Activated CD4-positive, alpha-beta T cell treated with anti-CD3 and anti-CD28 coated beads for 36 hours (primary cell): ENCODE measurements at regions of chr1 and their contacts with region 1.

Region 1: GRCh38 chr1:208245185-208245705 is 1.1 kb upstream of the PLXNA2 start:
- DNase-seq: peak; percentile 88
- ATAC-seq: peak; percentile 75
- H3K4me3 Mint-ChIP-seq: peak overlapping the region; percentile 44
- H3K27ac Mint-ChIP-seq: no peak overlapping the region
- H3K4me1 Mint-ChIP-seq: peaks cover 12% of the 10 kb centered on the region
- H3K27me3 Mint-ChIP-seq: peaks cover 21% of the 10 kb centered on the region

Region 2: GRCh38 chr1:208093754-208094719 is 151.2 kb before region 1 on chr1:
- CTCF ChIA-PET with region 1: interaction called, 7 read pairs
- POLR2A ChIA-PET with region 1: no interaction called
- intact Hi-C with region 1: loop called in 1 of 2 experiments (anchors 2 kb)
- DNase-seq: peak; percentile 83
- ATAC-seq: peak; percentile 64
- H3K4me3 Mint-ChIP-seq: no peak overlapping the region
- H3K27ac Mint-ChIP-seq: no peak overlapping the region
- H3K4me1 Mint-ChIP-seq: no peaks in the 10 kb centered on the region
- H3K27me3 Mint-ChIP-seq: no peaks in the 10 kb centered on the region

Region 3: DNA sequence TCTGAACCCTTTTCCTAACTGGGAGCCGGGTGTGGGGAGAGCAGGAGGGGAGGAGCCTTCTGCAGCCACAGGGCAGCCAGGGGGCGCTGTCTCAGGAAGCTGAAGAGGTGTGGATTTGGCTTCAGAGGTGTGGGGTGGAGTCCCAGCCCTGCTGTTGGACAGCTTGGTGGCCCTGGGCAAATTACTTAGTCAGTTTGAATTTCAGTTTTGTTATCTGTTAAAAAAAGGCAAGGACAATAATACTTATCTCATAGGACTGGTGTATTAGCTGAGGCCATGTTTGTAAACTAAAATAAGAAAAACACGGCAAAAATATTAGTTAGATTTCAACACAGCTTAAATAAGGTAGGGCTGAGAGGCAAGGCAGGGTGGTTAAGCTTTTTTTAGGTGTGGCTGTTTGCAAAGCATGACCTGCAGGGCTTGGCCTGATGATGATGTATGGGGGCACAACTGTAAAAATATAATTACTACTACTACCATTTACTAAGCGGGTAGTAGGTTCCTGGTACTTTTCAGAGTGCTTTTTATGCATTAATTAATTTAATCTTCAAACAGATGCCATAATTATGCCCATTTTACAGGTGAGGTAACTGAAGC is 112.9 kb before region 1 on chr1:
- CTCF ChIA-PET with region 1: interaction called, 40 read pairs
- POLR2A ChIA-PET with region 1: no interaction called
- intact Hi-C with region 1: loop called (anchors 1 to 2 kb)
- DNase-seq: peak; percentile 82
- ATAC-seq: peak; percentile 90
- H3K4me3 Mint-ChIP-seq: no peak overlapping the region
- H3K27ac Mint-ChIP-seq: no peak overlapping the region
- H3K4me1 Mint-ChIP-seq: peaks cover 5% of the 10 kb centered on the region
- H3K27me3 Mint-ChIP-seq: peaks cover 13% of the 10 kb centered on the region